GM12878 (cell line): ENCODE measurements at regions of chr18 and their contacts with region 1.

Region 1: GRCh38 chr18:864872-865273 is 39.8 kb upstream of the ADCYAP1 start:
- DNase-seq: no peak
- ATAC-seq: peak; percentile 92
- H3K4me3 ChIP-seq: no peak overlapping the region
- H3K27ac ChIP-seq: no peak overlapping the region
- H3K4me1 ChIP-seq: no peaks in the 10 kb centered on the region
- H3K27me3 ChIP-seq: no peaks in the 10 kb centered on the region; a peak in 2 of 4 replicates
- CTCF ChIP-seq: peak; percentile 92 to 99 (median 93)
- EP300 ChIP-seq: no peak
- POLR2A ChIP-seq: no peak
- RAD21 ChIP-seq: peak; percentile 92

Region 2: DNA sequence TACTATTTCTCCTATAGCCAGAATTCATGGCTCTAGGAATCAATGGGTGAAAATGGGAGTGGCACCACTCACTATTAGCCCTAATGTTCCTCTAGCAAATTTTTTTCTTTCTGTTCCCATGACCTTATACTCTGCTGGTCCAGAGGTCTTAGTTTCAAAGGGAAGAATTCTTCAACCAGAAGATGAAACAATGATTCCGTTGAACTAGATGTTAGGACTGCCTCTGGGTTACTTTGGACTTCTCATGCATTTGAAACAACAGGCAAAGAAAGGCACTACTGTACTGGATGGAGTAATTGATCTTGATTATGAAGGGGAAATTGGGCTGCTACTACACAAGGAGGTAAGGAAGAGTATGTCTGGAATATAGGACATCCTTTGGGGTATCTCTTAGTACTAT is 21.2 kb after region 1 on chr18:
- CTCF ChIA-PET with region 1: no interaction called
- POLR2A ChIA-PET with region 1: no interaction called
- RAD21 ChIA-PET with region 1: no interaction called
- SMC1A ChIA-PET with region 1: no interaction called
- in situ Hi-C with region 1: no loop called
- intact Hi-C with region 1: no loop called
- DNase-seq: no peak
- ATAC-seq: no peak
- H3K4me3 ChIP-seq: no peak overlapping the region
- H3K27ac ChIP-seq: no peak overlapping the region
- H3K4me1 ChIP-seq: no peaks in the 10 kb centered on the region
- H3K27me3 ChIP-seq: no peaks in the 10 kb centered on the region; a peak in 1 of 4 replicates
- CTCF ChIP-seq: no peak
- EP300 ChIP-seq: no peak
- POLR2A ChIP-seq: no peak
- RAD21 ChIP-seq: no peak

Region 3: GRCh38 chr18:1304392-1304974 is 439.6 kb after region 1 on chr18:
- CTCF ChIA-PET with region 1: no interaction called
- POLR2A ChIA-PET with region 1: no interaction called
- RAD21 ChIA-PET with region 1: no interaction called
- SMC1A ChIA-PET with region 1: no interaction called
- in situ Hi-C with region 1: no loop called
- intact Hi-C with region 1: no loop called
- DNase-seq: no peak
- ATAC-seq: no peak
- H3K4me3 ChIP-seq: no peak overlapping the region
- H3K27ac ChIP-seq: no peak overlapping the region
- H3K4me1 ChIP-seq: no peaks in the 10 kb centered on the region
- H3K27me3 ChIP-seq: no peaks in the 10 kb centered on the region
- CTCF ChIP-seq: no peak
- EP300 ChIP-seq: no peak
- POLR2A ChIP-seq: no peak
- RAD21 ChIP-seq: no peak

Region 4: GRCh38 chr18:1499265-1499664 is 634.4 kb after region 1 on chr18:
- CTCF ChIA-PET with region 1: no interaction called
- POLR2A ChIA-PET with region 1: no interaction called
- RAD21 ChIA-PET with region 1: no interaction called
- SMC1A ChIA-PET with region 1: no interaction called
- in situ Hi-C with region 1: loop called (anchors 25 kb)
- intact Hi-C with region 1: loop called (anchors 2 kb)
- DNase-seq: no peak
- ATAC-seq: no peak
- H3K4me3 ChIP-seq: no peak overlapping the region
- H3K27ac ChIP-seq: no peak overlapping the region
- H3K4me1 ChIP-seq: no peaks in the 10 kb centered on the region
- H3K27me3 ChIP-seq: no peaks in the 10 kb centered on the region; a peak in 1 of 4 replicates
- CTCF ChIP-seq: no peak; a peak in 1 of 6 replicates
- EP300 ChIP-seq: no peak
- POLR2A ChIP-seq: no peak
- RAD21 ChIP-seq: no peak

Region 5: DNA sequence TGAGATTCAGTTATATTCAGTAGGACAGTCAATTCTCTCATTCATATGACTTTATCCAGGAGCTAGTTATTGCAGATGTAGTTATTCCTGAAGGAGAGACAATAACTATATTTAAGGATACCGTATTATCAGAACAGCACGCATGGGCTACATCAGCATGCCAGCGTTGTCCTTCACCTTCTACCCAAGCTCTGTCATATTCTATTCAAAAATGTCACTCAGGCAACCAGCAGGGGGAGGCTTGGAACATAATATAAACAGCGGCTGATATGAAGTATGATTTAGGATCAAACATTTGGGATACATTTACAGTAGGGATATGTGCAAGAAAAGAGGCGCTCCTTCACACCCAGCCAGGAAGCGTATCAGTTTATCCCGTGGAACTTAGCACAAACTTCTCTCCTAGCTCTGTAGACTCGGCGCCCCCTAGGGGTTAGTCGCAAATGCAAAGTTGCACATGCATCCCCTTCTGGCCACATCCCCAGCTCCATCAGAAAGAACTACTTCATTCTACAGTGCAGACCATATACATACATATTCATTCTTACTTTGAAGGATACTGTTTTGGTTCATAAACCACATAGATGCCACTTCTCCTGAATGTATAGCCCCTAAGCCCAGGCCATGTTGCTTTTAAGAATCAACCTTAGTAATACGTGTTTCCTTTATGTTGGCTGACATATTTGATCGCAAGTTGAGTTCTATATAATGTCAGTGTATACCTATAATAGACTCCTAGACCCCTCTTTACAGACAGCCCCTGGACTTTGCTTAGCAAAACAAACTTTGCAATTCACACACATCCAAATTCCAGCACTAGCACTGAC is 799.2 kb after region 1 on chr18:
- CTCF ChIA-PET with region 1: interaction called, 6 read pairs
- POLR2A ChIA-PET with region 1: no interaction called
- RAD21 ChIA-PET with region 1: no interaction called
- SMC1A ChIA-PET with region 1: no interaction called
- in situ Hi-C with region 1: loop called (anchors 10 kb)
- intact Hi-C with region 1: loop called (anchors 5 kb)
- DNase-seq: no peak
- ATAC-seq: peak; percentile 79
- H3K4me3 ChIP-seq: no peak overlapping the region
- H3K27ac ChIP-seq: no peak overlapping the region
- H3K4me1 ChIP-seq: no peaks in the 10 kb centered on the region
- H3K27me3 ChIP-seq: no peaks in the 10 kb centered on the region
- CTCF ChIP-seq: peak; percentile 48 to 76 (median 53)
- EP300 ChIP-seq: no peak
- POLR2A ChIP-seq: no peak
- RAD21 ChIP-seq: peak; percentile 20; the same call in 1 of the 2 replicates

Region 6: DNA sequence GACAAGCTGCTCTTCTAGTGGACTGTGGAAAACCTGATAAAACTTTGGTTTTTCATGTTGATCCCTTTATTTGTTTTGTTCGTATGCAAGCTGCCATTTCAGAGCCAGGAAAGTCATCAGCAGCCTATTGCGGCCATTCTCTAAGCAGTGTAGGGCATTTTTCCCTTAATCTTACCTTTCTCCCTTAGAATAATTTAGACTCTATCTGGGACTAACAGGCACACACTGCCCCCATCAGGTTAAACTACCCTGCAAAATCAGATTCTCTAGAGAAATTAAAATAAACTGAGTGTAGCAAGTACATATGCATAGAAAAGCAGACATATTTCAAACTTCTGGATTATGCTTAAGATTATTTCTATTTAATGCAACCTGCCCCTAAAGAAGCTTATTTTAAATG is 1359.0 kb after region 1 on chr18:
- CTCF ChIA-PET with region 1: no interaction called
- POLR2A ChIA-PET with region 1: no interaction called
- RAD21 ChIA-PET with region 1: no interaction called
- SMC1A ChIA-PET with region 1: no interaction called
- in situ Hi-C with region 1: loop called (anchors 10 kb)
- intact Hi-C with region 1: no loop called
- DNase-seq: no peak
- ATAC-seq: no peak
- H3K4me3 ChIP-seq: no peak overlapping the region
- H3K27ac ChIP-seq: no peak overlapping the region
- H3K4me1 ChIP-seq: no peaks in the 10 kb centered on the region
- H3K27me3 ChIP-seq: no peaks in the 10 kb centered on the region
- CTCF ChIP-seq: peak; percentile 25 to 35 (median 31); a peak in 3 of 6 replicates
- EP300 ChIP-seq: no peak
- POLR2A ChIP-seq: no peak
- RAD21 ChIP-seq: peak; percentile 42; the same call in 1 of the 2 replicates